Astrocyte of the cerebellum (primary cell): ENCODE measurements at regions of chr7 and their contacts with region 1.

Region 1: GRCh38 chr7:158239290-158239981 is 348.2 kb downstream of the PTPRN2 start:
- DNase-seq: no peak
- H3K4me3 ChIP-seq: no peak overlapping the region
- CTCF ChIP-seq: no peak

Region 2: DNA sequence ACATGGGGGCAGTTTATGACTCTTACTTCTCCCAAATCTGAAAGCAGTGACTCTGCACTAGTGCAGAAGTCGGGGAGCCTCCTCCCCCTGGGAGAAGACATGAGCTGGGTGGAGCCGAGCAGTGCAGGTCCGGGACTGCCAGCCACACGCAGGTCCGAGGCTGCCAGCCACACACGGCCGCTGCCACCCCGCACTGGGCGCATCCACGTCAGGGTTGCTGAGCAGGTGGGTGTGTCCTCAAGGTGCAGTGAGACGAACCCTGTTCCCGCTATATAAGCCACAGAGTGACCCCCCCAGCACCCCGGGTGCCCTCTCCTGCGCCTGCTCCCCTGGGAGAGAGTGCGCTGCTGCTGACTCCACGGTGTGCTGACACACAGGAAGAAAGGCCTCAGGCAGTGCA is 82.0 kb before region 1 on chr7:
- in situ Hi-C with region 1: loop called (anchors 5 kb)
- DNase-seq: no peak
- H3K4me3 ChIP-seq: no peak overlapping the region
- CTCF ChIP-seq: no peak

Region 3: DNA sequence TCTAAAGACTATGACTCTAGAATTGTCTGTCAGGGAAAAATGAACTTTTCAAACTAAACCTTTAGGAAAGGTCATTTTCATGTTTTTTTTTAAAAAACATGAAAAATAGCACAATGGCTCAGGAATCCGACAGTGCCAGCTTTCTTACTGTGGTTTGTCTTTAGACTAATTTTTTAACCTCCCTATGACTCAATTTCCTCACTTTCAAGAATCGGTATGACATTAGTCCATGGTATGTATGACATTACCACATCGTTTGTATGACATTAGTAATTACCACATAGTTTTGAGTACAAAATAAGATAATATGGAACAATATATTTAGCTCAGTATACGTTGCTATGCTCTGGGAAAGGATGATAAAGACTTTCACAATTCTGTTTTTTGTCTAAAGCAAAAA is 35.0 kb before region 1 on chr7:
- in situ Hi-C with region 1: no loop called
- DNase-seq: no peak
- H3K4me3 ChIP-seq: no peak overlapping the region
- CTCF ChIP-seq: no peak